Heart right ventricle (tissue), 16 donors: ENCODE measurements at regions of chr6 and their contacts with region 1.

Region 1: GRCh38 chr6:156564127-156564806 is 212.9 kb upstream of the ARID1B start:
- DNase-seq: peak; percentile 77 to 81
- ATAC-seq: peak; percentile 94 to 98 (median 96)
- H3K4me3 ChIP-seq: no peak overlapping the region
- H3K27ac ChIP-seq: peak overlapping the region in 1 of 10 donors; percentile 35
- H3K4me1 ChIP-seq: peaks cover 0 to 11% (median 5%) of the 10 kb centered on the region in 9 donors
- H3K27me3 ChIP-seq: no peaks in the 10 kb centered on the region
- CTCF ChIP-seq: peak; percentile 92 to 99 (median 96)

Region 2: GRCh38 chr6:155045561-155046404 is 1518.5 kb before region 1 on chr6:
- intact Hi-C with region 1: loop called in 1 of 10 experiments (anchors 5 kb)
- DNase-seq: no peak
- ATAC-seq: no peak
- H3K4me3 ChIP-seq: no peak overlapping the region
- H3K27ac ChIP-seq: no peak overlapping the region
- H3K4me1 ChIP-seq: peaks cover 0 to 12% (median 4%) of the 10 kb centered on the region in 9 donors
- H3K27me3 ChIP-seq: no peaks in the 10 kb centered on the region
- CTCF ChIP-seq: no peak

Region 3: DNA sequence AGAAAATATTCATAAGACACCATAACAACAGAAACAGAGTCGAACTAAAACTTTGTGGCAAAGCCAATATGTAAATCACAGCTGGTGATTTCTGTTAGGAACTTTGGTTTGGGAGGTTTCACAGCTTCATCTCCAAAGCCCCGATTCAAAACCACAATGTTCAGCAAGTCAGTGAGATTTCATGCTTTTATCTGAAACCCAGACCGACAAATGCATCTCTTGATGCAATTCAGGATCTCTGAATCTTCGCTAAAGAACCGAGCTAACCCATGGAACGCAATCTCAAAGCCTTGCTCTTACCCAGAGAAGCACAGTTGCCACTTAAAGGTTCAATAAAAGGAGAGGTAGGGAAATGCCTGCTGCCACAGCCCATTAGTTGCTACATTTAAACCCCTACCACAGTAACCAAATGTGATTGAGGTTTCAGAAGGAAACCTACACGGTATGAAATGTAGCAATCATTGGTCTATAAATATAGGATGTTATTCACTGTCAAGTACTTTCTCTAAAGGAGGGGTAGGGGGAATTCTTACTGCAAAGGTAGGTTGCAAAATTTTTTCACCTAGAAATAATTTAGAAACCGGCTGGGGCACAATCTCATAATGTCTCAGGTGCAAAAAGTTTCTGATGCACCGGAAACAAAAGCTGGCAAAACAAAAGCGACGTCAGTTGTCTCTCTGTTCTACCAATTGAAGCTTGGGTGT is 168.0 kb before region 1 on chr6:
- intact Hi-C with region 1: no loop called
- DNase-seq: no peak
- ATAC-seq: no peak
- H3K4me3 ChIP-seq: no peak overlapping the region
- H3K27ac ChIP-seq: no peak overlapping the region
- H3K4me1 ChIP-seq: peaks cover 0 to 4% (median 0%) of the 10 kb centered on the region in 9 donors
- H3K27me3 ChIP-seq: peaks cover 0 to 44% (median 21%) of the 10 kb centered on the region in 7 donors
- CTCF ChIP-seq: no peak

Region 4: DNA sequence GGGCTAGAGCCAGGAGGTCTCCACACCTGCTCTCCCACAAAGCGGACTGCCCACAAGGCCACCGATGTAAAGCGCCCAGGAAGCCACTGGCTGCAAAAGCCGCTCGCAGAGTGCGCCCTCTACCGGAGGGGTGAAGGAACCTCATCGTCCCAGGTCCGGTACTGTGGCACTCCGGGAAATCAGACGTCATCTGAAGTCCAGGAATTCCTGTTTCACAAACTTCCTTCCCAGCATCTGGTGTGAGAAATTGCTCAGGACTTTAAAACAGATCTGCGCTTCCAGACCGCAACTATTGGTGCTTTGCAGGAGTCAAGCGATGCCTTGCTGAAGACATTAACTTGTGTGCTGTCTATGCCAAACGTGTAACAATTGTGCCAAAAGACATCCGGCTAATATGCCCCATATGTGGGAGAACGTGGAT is 97.8 kb after region 1 on chr6:
- intact Hi-C with region 1: no loop called
- DNase-seq: no peak
- ATAC-seq: peak in 2 of 8 donors; percentile 48 to 52
- H3K4me3 ChIP-seq: no peak overlapping the region
- H3K27ac ChIP-seq: no peak overlapping the region
- H3K4me1 ChIP-seq: peaks cover 5 to 25% (median 20%) of the 10 kb centered on the region in 9 donors
- H3K27me3 ChIP-seq: no peaks in the 10 kb centered on the region
- CTCF ChIP-seq: peak in 8 of 9 donors; percentile 13 to 54 (median 48)

Region 5: DNA sequence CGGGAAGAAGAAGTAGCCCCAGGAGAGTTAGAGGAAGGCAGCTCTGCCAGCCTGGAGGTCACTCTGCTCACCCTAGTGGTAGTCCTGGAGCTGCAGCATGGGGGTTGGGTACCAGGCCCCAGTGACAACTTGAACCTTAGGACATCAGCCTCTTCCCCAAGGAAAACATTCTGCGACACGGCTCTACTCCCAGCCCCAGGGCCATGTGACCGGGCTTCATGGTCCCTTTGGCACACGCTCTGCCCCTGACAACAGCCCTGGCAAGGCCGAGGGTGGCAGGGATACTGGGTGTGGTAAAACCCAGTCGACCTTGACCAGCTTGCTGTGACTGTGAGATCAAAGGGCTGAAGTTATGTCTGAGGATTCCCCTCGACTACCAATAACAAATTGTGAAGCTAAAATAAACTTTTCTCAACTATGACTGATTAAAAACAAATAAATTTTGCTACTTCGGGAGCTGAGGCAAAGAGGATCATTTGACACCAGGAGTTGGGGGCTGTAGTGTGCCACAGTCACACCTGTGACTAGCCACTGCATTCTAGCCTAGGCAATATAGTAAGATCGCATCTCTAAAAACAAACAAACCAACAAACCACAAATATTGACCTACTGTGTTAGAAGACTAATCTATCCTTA is 188.5 kb after region 1 on chr6:
- intact Hi-C with region 1: loop called in 1 of 10 experiments (anchors 10 kb)
- DNase-seq: peak in 1 of 2 donors; percentile 20
- ATAC-seq: peak in 7 of 8 donors; percentile 25 to 76 (median 58)
- H3K4me3 ChIP-seq: no peak overlapping the region
- H3K27ac ChIP-seq: no peak overlapping the region
- H3K4me1 ChIP-seq: no peaks in the 10 kb centered on the region
- H3K27me3 ChIP-seq: no peaks in the 10 kb centered on the region
- CTCF ChIP-seq: peak in 7 of 9 donors; percentile 19 to 45 (median 32)

Region 6: GRCh38 chr6:156767603-156768467 is 203.6 kb after region 1 on chr6:
- intact Hi-C with region 1: loop called in 6 of 10 experiments (anchors 5 to 10 kb)
- DNase-seq: no peak
- ATAC-seq: no peak
- H3K4me3 ChIP-seq: no peak overlapping the region
- H3K27ac ChIP-seq: no peak overlapping the region
- H3K4me1 ChIP-seq: peaks cover 0 to 4% (median 0%) of the 10 kb centered on the region in 9 donors
- H3K27me3 ChIP-seq: no peaks in the 10 kb centered on the region
- CTCF ChIP-seq: no peak

Region 7: DNA sequence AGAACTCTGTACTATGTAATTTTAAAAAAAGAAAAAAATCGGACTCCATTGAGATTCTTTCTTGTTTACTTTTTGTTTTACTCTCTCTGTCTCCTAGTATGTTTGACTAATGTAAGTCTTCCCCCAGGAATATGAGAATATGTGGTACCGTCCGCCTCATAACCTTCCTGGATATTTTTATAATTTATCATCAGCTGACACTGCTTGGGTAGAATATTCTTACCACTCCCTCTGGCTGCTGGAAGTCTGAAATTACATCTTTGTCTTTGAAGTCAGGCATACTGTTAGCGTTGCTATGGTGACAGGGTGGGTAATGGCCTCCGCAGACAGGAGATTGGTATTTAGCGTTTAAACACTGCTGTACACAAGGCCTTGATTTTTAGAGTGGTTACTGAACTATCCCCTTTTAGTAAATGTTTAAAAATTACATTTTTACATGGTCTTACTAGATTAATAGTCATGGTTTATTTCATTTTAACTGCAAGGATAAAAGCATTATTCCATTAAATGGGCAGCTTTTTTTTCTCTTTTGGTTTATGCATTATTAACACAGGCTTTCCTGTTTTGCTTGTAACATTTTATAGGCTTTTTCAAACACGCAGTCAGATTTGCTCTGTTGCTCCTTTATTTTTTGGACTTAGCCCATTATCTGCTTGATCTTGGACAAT is 389.3 kb after region 1 on chr6:
- intact Hi-C with region 1: loop called in 2 of 10 experiments (anchors 5 to 10 kb)
- DNase-seq: peak in 1 of 2 donors; percentile 68
- ATAC-seq: peak; percentile 62 to 88 (median 79)
- H3K4me3 ChIP-seq: peak overlapping the region in 6 of 10 donors; percentile 6 to 23 (median 14)
- H3K27ac ChIP-seq: peak overlapping the region in 9 of 10 donors; percentile 8 to 75 (median 36)
- H3K4me1 ChIP-seq: peaks cover 15 to 97% (median 87%) of the 10 kb centered on the region in 9 donors
- H3K27me3 ChIP-seq: no peaks in the 10 kb centered on the region
- CTCF ChIP-seq: peak in 7 of 9 donors; percentile 38 to 71 (median 44)

Region 8: GRCh38 chr6:157184202-157185020 is 620.1 kb after region 1 on chr6:
- intact Hi-C with region 1: loop called in 6 of 10 experiments (anchors 5 to 10 kb)
- DNase-seq: peak; percentile 63 to 72
- ATAC-seq: peak; percentile 66 to 87 (median 76)
- H3K4me3 ChIP-seq: peak overlapping the region in 2 of 10 donors; percentile 20 to 23
- H3K27ac ChIP-seq: peak overlapping the region in 2 of 10 donors; percentile 5 to 24
- H3K4me1 ChIP-seq: peaks cover 0 to 42% (median 23%) of the 10 kb centered on the region in 9 donors
- H3K27me3 ChIP-seq: no peaks in the 10 kb centered on the region
- CTCF ChIP-seq: peak; percentile 77 to 93 (median 90)

Region 9: DNA sequence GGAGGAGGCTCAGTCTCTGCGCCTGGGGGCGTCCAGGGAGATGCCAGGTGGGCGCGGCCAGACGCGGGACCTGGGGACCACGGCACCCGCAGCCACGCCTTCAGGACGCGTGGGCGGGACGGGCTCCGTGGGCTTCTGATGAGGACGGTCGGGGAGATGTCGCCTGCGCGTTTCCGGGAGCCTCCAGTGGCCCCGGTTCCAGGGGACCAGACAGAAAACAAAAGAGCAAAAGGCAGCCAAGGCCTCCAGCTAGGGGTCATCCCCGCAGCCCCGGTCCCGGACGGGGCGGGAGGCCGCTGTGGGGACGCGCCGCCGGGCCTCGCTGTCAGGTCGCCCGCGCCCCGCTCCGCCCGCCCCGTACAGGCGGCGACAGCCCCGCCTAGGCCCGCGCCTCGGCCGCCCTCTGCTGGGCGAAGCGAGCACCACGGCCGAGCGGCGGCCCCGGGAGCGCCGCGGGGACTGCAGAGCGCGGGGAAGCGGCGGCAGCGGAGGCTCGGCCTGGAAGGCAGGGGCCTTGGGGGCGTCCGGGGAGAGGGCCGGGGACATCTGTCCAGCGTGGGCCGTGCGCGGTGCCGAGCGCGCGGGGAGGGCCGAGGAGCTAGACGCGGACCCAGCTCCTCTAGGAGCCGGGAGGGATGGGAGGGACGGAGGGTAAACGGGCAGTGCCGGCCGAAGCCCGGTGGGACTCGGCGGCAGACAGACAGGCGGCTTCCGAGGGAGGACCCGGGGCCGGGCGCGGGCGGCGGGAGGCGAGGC is 710.4 kb after region 1 on chr6:
- intact Hi-C with region 1: loop called in 1 of 10 experiments (anchors 10 kb)
- DNase-seq: peak; percentile 72 to 80
- ATAC-seq: peak; percentile 88 to 96 (median 96)
- H3K4me3 ChIP-seq: peak overlapping the region; percentile 46 to 72 (median 67)
- H3K27ac ChIP-seq: peak overlapping the region; percentile 58 to 89 (median 83)
- H3K4me1 ChIP-seq: peaks cover 0 to 37% (median 7%) of the 10 kb centered on the region in 9 donors
- H3K27me3 ChIP-seq: no peaks in the 10 kb centered on the region
- CTCF ChIP-seq: peak; percentile 55 to 95 (median 90)